A549 (cell line): ENCODE measurements at regions of chr18 and their contacts with region 1.

Region 1: DNA sequence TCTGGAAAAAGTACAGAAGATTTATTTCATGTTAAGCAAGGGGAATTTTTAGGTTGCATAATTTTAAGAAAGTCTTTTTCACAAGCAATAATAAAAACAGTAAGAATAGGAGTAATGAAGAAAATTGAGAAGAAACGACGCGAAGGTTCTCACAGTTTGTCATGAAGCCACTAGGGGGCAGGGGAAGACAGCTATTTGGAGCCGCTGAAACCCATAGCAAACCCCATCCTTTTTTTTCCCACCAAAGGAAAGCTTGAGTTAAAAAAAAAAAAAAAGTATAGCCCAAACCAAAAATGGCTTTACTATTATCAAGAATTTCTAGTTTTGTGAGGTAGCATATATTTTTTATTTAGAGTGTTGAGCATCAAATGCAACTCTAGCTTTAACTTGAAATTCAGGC is 300.9 kb downstream of the PHLPP1 start:
- DNase-seq: peak; percentile 36 to 41
- ATAC-seq: peak; percentile 47 to 73; a peak in 3 of 6 replicates
- H3K4me3 ChIP-seq: no peak overlapping the region
- H3K27ac ChIP-seq: no peak overlapping the region
- H3K4me1 ChIP-seq: no peaks in the 10 kb centered on the region
- CTCF ChIP-seq: peak; percentile 66
- EP300 ChIP-seq: no peak
- POLR2A ChIP-seq: no peak
- RAD21 ChIP-seq: peak; percentile 76 to 83

Region 2: GRCh38 chr18:63005306-63005705 is 11.0 kb before region 1 on chr18:
- CTCF ChIA-PET with region 1: interaction called, 10 read pairs
- POLR2A ChIA-PET with region 1: no interaction called
- DNase-seq: no peak
- ATAC-seq: no peak
- H3K4me3 ChIP-seq: no peak overlapping the region
- H3K27ac ChIP-seq: no peak overlapping the region
- H3K4me1 ChIP-seq: no peaks in the 10 kb centered on the region
- CTCF ChIP-seq: no peak
- EP300 ChIP-seq: no peak
- POLR2A ChIP-seq: no peak
- RAD21 ChIP-seq: no peak

Region 3: GRCh38 chr18:63083020-63083531 is 66.8 kb after region 1 on chr18:
- CTCF ChIA-PET with region 1: no interaction called
- POLR2A ChIA-PET with region 1: no interaction called
- DNase-seq: no peak
- ATAC-seq: no peak
- H3K4me3 ChIP-seq: no peak overlapping the region
- H3K27ac ChIP-seq: no peak overlapping the region
- H3K4me1 ChIP-seq: no peaks in the 10 kb centered on the region
- CTCF ChIP-seq: no peak
- EP300 ChIP-seq: no peak
- POLR2A ChIP-seq: no peak
- RAD21 ChIP-seq: no peak

Region 4: DNA sequence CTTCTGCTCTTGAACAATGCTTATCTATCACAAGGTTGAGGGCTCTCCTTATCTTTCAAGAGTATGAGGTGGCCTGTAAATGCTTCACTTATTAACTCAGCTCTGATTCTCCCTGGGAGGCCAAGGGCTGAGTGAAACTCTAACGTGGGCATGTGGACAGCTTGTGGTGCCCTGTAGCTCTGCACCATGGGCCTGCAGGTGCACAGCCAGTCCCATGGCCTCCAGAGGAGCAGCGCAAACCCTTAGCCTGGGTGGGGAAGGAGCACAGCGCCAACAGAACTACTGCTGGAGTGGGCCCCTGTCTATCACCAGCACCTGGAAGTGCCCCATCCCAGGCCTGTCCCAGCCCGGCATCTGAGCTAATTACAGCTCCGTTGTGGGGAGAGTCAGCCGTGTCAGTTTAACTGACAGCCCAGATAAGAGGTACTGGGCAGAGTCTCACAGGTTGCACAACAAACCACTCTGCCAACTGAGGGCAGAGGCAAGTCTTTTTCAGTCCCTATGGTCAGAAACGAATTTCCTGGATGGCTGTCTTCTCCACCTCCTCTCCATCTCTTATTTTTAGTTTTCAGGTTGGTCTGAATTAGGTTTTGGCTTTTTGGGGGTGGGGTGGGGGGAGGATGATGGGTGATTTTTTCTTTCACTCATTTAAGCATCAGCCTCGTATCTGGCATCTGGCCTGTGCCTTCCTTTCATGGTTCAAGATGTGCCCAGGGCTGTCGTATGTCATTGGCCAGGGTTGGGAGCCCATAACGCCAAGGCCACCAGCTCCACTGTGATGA is 83.8 kb after region 1 on chr18:
- CTCF ChIA-PET with region 1: interaction called, 10 read pairs
- POLR2A ChIA-PET with region 1: no interaction called
- DNase-seq: no peak
- ATAC-seq: peak; percentile 30 to 39; a peak in 2 of 6 replicates
- H3K4me3 ChIP-seq: no peak overlapping the region
- H3K27ac ChIP-seq: no peak overlapping the region
- H3K4me1 ChIP-seq: no peaks in the 10 kb centered on the region
- CTCF ChIP-seq: no peak
- EP300 ChIP-seq: no peak
- POLR2A ChIP-seq: no peak
- RAD21 ChIP-seq: no peak

Region 5: DNA sequence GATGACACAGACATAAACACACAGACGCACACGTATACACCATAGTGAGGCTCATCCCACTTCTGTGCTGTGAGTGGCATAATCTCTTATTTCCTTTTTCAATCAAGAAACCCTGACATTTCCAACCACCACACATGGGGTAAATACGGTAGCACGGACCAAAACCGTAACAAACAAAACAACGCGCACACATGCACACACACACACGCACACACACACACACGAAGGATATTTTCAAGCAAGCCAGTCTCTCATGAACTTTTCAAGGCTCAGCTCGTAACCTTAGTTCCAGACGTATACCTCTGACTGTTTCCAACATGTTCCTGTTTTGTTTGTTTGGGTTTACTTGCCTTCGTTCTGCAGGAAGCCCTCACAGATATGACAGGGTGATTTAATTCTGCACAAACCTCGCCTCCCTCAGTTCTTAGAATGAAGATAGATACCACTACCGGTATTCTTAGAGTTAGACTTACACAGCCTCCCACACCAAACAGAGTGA is 183.5 kb after region 1 on chr18:
- CTCF ChIA-PET with region 1: no interaction called
- POLR2A ChIA-PET with region 1: no interaction called
- DNase-seq: no peak
- ATAC-seq: no peak
- H3K4me3 ChIP-seq: no peak overlapping the region
- H3K27ac ChIP-seq: no peak overlapping the region
- H3K4me1 ChIP-seq: no peaks in the 10 kb centered on the region
- CTCF ChIP-seq: no peak
- EP300 ChIP-seq: no peak
- POLR2A ChIP-seq: no peak
- RAD21 ChIP-seq: no peak

Region 6: DNA sequence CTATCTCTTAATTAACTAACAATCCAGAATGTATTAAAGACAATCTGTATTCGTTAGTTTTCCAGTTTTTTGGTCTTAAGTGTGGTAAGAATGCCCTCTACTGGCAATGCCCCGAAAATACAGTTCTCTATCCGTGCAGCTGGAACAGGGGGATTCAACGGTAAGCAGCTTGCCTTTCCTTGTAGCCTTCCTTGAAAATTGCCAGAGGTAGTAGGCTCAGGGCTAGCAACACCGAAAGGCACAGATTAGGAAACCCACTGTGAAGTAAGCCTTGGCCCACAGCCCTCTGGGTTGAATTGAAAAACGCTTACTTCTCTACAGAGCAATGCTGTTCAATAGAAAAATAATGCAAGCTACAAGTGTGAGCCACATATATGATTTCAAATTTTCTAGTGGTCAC is 423.1 kb after region 1 on chr18:
- CTCF ChIA-PET with region 1: interaction called, 20 read pairs
- POLR2A ChIA-PET with region 1: no interaction called
- DNase-seq: peak; percentile 36 to 68
- ATAC-seq: peak; percentile 47 to 81; a peak in 4 of 6 replicates
- H3K4me3 ChIP-seq: no peak overlapping the region
- H3K27ac ChIP-seq: no peak overlapping the region
- H3K4me1 ChIP-seq: no peaks in the 10 kb centered on the region
- CTCF ChIP-seq: peak; percentile 70
- EP300 ChIP-seq: no peak
- POLR2A ChIP-seq: no peak
- RAD21 ChIP-seq: peak; percentile 72 to 75